ENCODE measurements at regions of chr3 and their contacts with region 1.

Region 1: DNA sequence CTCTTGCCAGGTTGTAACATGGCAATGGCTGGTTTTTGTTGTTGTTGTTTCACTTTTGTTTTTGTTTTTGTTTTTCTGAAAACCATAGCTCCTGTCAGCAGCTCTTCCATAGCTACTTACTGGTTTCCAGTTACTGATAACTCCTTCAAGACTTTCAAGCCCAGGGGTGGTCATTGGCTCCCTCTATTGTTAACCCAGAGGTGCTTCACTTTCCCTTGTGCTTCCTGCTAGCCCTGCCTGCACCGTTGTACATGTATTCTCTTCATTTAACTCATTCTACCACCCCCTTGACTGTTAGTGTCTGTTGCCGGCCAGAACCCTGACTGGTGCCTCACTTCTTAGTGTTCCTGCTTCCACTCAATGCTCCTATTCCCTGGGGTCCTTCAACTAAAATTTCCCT is 4.2 kb upstream of the TRAT1 start:
- DNase-seq: peak; percentile 10
- ATAC-seq: no peak
- H3K4me3 ChIP-seq: no peak overlapping the region
- H3K27ac ChIP-seq: no peak overlapping the region
- H3K4me1 ChIP-seq: no peaks in the 10 kb centered on the region
- H3K27me3 ChIP-seq: no peaks in the 10 kb centered on the region
- CTCF ChIP-seq: no peak
- POLR2A ChIP-seq: no peak
- RAD21 ChIP-seq: no peak

Region 2: DNA sequence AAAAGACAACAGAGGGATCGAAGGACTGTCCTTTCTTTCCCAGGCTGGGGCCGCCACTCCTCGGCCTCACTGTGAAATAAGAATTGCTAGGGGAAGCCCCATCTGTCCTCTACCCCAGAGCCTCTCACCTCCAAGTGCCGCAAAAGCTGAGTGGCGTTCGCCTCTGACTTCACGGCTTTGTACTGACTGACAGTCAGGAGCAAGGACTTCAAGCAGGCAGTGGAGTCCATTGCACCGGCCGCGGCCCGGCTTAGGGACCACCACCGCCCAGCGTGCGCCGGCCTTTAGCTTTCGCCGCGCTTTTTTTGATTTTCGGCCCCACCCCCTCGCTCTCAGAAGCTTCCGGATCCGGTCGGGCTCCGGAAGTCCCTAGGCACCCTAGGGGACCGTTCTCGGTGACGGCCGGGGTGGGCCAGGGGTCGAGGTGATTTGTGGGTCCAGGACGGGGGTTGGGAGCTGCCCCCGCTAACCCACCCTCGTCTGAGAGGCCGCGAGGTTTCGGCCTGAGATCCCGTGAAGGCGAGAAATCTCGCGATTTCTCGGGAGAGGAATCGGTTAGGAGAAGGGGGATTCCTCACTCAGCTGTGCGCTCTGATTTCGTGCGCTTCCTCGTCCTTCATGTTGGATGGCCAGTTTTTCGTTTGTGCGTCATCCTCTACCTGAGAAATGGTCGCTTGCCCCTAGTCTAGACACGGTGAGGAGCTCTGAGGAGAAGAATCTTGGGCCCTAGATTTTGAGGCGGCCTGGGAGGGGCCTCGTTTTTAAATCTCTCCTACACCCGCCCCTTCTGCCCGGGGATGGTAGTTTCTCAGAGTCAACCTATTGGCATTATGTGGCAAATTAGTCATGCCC is 229.0 kb before region 1 on chr3 and contains the starts of genes CIP2A and DZIP3:
- CTCF ChIA-PET with region 1: no interaction called
- POLR2A ChIA-PET with region 1: no interaction called
- dilution Hi-C with region 1: no loop called
- in situ Hi-C with region 1: no loop called
- intact Hi-C with region 1: no loop called
- DNase-seq: peak; percentile 94
- ATAC-seq: peak; percentile 97
- H3K4me3 ChIP-seq: peak within 1 kb of the TSS; percentile 70
- H3K27ac ChIP-seq: peak within 1 kb of the TSS; percentile 92
- H3K4me1 ChIP-seq: no peaks in the 10 kb centered on the region
- H3K27me3 ChIP-seq: no peaks in the 10 kb centered on the region
- CTCF ChIP-seq: no peak
- POLR2A ChIP-seq: peak; percentile 95
- RAD21 ChIP-seq: no peak
- total RNA-seq, gene CIP2A: 27.8 and 31.7 TPM in 2 replicates
- total RNA-seq, gene DZIP3: 9.9 and 11.7 TPM in 2 replicates

Region 3: GRCh38 chr3:108669208-108669607 is 149.2 kb before region 1 on chr3:
- CTCF ChIA-PET with region 1: no interaction called
- POLR2A ChIA-PET with region 1: no interaction called
- dilution Hi-C with region 1: no loop called
- in situ Hi-C with region 1: no loop called
- intact Hi-C with region 1: loop called (anchors 5 kb)
- DNase-seq: no peak
- ATAC-seq: no peak
- H3K4me3 ChIP-seq: no peak overlapping the region
- H3K27ac ChIP-seq: no peak overlapping the region
- H3K4me1 ChIP-seq: no peaks in the 10 kb centered on the region
- H3K27me3 ChIP-seq: no peaks in the 10 kb centered on the region
- CTCF ChIP-seq: no peak
- POLR2A ChIP-seq: no peak
- RAD21 ChIP-seq: no peak

Region 4: DNA sequence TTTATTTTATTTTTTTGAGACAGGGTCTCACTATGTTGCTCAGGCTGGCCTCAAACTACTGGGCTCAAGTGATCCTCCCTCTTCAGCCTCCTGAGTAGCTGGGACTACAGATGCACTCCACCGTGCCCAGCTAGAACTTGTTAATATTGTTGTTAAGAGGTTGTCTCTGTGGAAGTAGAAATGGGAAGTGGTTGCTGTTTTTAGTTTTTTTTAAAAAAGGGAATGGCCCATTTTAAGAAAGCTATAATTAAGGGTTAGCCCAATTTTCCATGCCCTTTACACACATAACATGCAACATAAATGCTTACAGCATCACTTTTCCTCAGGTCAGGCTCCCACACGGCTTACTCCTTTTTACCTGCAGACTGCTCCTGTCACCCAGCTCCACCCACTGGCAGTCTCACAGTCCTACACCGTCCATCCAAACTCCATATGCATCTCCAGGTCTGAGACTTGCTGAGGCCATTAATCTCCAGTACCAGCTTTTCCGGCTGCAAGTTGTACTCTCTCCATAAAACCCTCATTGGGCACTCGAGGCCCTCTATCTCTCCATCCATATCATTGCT is 279.8 kb after region 1 on chr3:
- CTCF ChIA-PET with region 1: no interaction called
- POLR2A ChIA-PET with region 1: no interaction called
- dilution Hi-C with region 1: no loop called
- in situ Hi-C with region 1: no loop called
- intact Hi-C with region 1: no loop called
- DNase-seq: no peak
- ATAC-seq: no peak
- H3K4me3 ChIP-seq: no peak overlapping the region
- H3K27ac ChIP-seq: no peak overlapping the region
- H3K4me1 ChIP-seq: no peaks in the 10 kb centered on the region
- H3K27me3 ChIP-seq: no peaks in the 10 kb centered on the region
- CTCF ChIP-seq: 0 out of 2 replicates have a peak, but pooled peaks have one; percentile 0
- POLR2A ChIP-seq: no peak
- RAD21 ChIP-seq: no peak